Naive thymus-derived CD4-positive, alpha-beta T cell (primary cell): ENCODE measurements at regions of chr4 and their contacts with region 1.

Region 1: DNA sequence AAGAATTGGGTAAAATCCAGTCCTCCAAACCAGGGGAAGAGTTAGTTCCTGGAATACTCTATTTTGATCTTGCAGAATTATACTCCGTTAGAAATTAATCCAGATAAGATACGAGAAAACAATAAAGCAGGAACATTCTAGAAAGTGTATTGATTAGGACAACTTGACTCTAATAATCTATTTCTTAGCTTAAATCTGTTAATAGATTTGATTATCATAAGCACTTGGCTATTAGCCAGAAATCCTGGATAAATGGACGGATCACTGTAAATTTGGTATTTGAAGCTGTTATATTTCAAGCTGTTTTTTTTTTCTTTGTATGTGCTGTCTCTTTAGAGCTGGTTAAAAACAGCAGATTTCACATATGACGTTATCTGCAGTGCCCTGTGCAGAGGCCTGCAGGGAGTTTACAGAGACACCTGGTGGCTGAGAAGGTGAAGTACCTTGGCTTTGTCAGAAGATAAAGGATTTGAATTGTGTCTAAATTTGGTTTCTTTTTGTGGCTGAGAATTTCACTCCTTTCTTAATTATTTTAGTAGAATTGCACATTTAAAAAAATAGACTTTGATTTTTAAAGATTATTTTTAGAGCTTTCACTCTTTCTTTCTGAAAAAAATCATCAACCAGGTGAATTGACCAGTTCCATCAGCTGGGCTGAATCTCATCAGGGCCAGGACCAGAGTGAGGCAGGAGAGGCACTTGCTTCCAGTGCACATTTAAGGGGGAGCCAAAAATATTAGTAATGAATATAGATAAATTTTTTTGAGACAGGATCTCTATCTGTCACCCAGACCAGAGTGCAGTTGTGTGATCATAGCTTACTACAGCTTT is 9.7 kb upstream of the CHRNA9 start:
- DNase-seq: peak in 7 of 9 donors; percentile 70 to 85 (median 82)
- ATAC-seq: peak; percentile 100
- H3K4me3 ChIP-seq: no peak overlapping the region
- H3K4me3 Mint-ChIP-seq: peak overlapping the region in 4 of 10 donors; percentile 0 to 48 (median 14)
- H3K27ac ChIP-seq: peak overlapping the region; percentile 45
- H3K27ac Mint-ChIP-seq: peak overlapping the region in 8 of 9 donors; percentile 25 to 87 (median 64)
- H3K4me1 ChIP-seq: peaks cover 0 to 8% of the 10 kb centered on the region in 2 donors
- H3K4me1 Mint-ChIP-seq: peaks cover 13 to 40% (median 35%) of the 10 kb centered on the region in 7 donors
- H3K27me3 ChIP-seq: no peaks in the 10 kb centered on the region
- H3K27me3 Mint-ChIP-seq: peaks cover 0 to 7% (median 4%) of the 10 kb centered on the region in 5 donors

Region 2: DNA sequence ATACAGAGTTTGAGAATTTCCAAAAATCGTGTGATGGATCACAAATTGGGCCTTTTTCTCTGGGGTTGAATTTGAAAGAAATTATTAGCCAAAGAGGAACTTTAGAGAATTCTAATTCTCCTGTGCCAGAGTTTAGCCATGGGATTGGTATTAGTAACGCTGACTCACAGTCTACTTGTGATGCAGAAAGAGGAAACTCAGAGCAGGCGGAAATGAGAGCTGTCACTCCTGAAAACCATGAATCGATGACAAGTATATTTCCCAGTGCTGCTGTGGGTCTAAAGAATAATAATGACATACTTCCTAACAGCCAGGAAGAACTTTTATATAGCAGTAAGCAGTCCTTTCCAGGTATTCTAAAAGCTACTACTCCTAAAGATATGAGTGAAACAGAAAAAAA is 203.9 kb before region 1 on chr4:
- CTCF ChIA-PET with region 1: interaction called, 4 read pairs
- POLR2A ChIA-PET with region 1: no interaction called
- intact Hi-C with region 1: loop called in 1 of 2 experiments (anchors 1 kb)
- DNase-seq: no peak
- ATAC-seq: peak; percentile 69
- H3K4me3 ChIP-seq: no peak overlapping the region
- H3K4me3 Mint-ChIP-seq: no peak overlapping the region
- H3K27ac ChIP-seq: peak overlapping the region; percentile 17
- H3K27ac Mint-ChIP-seq: peak overlapping the region; percentile 12 to 75 (median 67)
- H3K4me1 ChIP-seq: peaks cover 7 to 25% of the 10 kb centered on the region in 2 donors
- H3K4me1 Mint-ChIP-seq: peaks cover 3 to 71% (median 54%) of the 10 kb centered on the region in 7 donors
- H3K27me3 ChIP-seq: no peaks in the 10 kb centered on the region
- H3K27me3 Mint-ChIP-seq: no peaks in the 10 kb centered on the region

Region 3: DNA sequence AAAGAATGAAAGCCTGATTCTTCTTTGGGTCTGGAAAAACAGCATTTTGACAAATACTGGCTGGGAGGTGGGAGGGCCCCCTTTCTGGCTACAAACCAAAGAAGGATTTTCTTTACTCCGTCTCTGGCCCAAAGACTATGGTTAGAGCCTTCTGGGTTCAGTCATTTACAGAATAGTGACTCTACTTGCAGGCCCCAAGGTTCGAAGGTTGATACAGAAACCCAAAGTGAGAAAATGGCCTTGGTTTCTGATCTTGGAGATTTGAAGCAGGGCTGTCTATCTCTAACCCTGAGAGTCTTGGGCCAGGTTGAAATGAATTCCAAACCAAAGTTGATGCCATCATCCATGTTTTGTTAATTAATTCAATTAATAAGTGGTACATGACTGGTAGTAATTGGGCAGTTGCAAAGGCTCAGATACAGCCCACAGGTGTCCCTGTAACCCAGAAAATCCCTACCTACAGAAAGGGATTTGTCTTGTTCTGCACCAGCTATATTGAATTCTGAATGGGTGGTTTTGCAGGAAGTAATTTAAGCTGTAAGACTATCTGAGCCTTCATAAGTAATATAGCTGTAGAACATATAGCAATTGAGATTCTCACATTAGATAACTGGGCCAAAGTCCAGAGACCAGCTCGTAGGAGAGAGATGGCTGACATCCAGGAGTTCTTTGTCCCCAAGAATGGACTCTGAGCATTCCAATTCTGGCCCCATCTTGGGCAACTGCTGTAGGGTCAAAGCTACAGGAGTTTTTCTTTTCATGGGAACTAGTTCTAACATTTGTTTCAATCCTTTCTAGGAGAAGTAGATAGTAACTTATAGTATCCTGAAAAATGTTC is 44.3 kb after region 1 on chr4:
- CTCF ChIA-PET with region 1: no interaction called
- POLR2A ChIA-PET with region 1: no interaction called
- intact Hi-C with region 1: no loop called
- DNase-seq: no peak
- ATAC-seq: no peak
- H3K4me3 ChIP-seq: no peak overlapping the region
- H3K4me3 Mint-ChIP-seq: no peak overlapping the region
- H3K27ac ChIP-seq: no peak overlapping the region
- H3K27ac Mint-ChIP-seq: peak overlapping the region in 1 of 9 donors; percentile 37
- H3K4me1 ChIP-seq: no peaks in the 10 kb centered on the region
- H3K4me1 Mint-ChIP-seq: peaks cover 0 to 4% (median 0%) of the 10 kb centered on the region in 7 donors
- H3K27me3 ChIP-seq: no peaks in the 10 kb centered on the region
- H3K27me3 Mint-ChIP-seq: peaks cover 0 to 5% (median 0%) of the 10 kb centered on the region in 5 donors